ENCODE measurements at regions of chr15 and their contacts with region 1.

Region 1: DNA sequence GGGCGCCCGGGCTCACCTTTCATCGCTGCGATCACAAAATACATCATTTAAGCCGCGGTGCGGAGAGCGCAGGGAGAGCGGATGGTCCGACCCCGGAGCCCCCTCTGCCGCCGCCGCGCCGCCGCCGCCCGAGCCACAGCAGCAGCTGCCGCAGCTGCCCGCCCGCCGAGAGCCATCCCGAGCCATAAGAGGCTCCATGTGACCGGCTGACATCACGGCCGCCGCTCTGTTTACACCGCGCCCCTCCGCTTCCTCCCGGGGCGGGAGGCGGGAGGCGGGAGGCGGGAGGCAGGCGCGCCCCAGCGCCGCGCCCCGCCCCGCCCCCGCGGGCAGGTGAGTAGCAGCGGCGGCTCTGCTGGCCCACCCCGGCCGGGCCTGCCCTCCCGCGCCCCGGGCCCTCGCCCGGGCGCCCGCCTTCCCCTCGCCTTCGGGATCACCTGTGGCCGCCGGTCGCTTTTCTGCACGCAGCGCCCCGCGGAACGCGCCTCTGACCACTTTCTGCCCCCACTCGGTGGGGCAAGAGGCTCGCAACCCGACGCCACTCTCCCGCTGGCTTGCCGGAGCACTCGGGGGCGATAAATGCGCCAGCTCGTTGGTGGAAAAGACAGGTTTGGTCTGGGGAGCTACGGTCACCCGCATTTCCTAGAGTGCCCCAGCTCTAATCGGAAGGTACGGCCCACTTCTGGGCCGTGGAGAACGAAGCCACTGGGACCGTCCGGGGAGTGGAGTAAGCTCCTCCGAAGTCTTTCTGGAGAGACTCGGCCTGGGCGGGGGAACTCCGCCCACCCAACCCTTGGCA is 113.6 kb upstream of the ICE2 start:
- DNase-seq: peak; percentile 74
- H3K4me3 ChIP-seq: peak overlapping the region; percentile 33 to 83 (median 49)
- H3K27ac ChIP-seq: peak overlapping the region; percentile 2
- H3K4me1 ChIP-seq: peaks cover 14% of the 10 kb centered on the region
- H3K27me3 ChIP-seq: no peaks in the 10 kb centered on the region
- CTCF ChIP-seq: peak; percentile 23 to 49
- POLR2A ChIP-seq: no peak

Region 2: GRCh38 chr15:60635507-60636352 is 43.2 kb after region 1 on chr15:
- CTCF ChIA-PET with region 1: no interaction called
- POLR2A ChIA-PET with region 1: no interaction called
- dilution Hi-C with region 1: no loop called
- intact Hi-C with region 1: loop called (anchors 2 kb)
- DNase-seq: peak; percentile 69
- H3K4me3 ChIP-seq: peak overlapping the region in 1 of 3 experiments; percentile 10
- H3K27ac ChIP-seq: peak overlapping the region; percentile 93
- H3K4me1 ChIP-seq: peaks cover 17% of the 10 kb centered on the region
- H3K27me3 ChIP-seq: no peaks in the 10 kb centered on the region
- CTCF ChIP-seq: no peak
- POLR2A ChIP-seq: no peak

Region 3: DNA sequence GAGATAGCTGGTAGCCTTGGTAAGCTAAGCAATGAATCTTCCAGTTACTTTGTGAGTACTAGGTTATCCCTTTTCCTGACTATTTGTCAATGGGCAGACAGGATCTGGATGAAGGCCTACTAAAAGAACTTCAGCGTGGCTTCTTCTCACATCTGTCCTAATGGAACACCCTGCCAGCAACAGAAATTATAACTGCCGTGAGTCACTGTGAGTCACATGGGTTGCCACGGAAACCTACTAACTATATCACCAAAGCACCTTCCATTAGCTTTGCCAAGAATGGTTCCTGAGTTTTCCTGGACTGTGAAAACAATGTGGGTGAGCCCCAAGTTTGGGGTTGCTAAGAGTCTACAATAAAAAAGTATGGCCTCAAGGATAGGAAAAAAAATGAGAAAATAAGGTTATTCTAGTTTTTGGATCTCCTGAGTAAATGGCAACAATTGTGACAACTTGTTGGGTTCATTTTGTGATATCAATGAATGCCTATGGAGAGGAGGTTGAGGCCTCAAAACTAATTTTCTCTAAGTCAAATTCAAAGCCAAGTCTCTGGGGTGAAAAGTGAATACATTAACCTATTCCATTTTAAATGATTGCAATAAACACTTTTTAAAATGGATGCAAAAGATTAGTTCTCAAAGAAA is 81.5 kb after region 1 on chr15:
- CTCF ChIA-PET with region 1: no interaction called
- POLR2A ChIA-PET with region 1: no interaction called
- dilution Hi-C with region 1: no loop called
- intact Hi-C with region 1: loop called (anchors 1 kb)
- DNase-seq: peak; percentile 97
- H3K4me3 ChIP-seq: no peak overlapping the region
- H3K27ac ChIP-seq: peak overlapping the region; percentile 68
- H3K4me1 ChIP-seq: peaks cover 9% of the 10 kb centered on the region
- H3K27me3 ChIP-seq: no peaks in the 10 kb centered on the region
- CTCF ChIP-seq: no peak
- POLR2A ChIP-seq: no peak

Region 4: DNA sequence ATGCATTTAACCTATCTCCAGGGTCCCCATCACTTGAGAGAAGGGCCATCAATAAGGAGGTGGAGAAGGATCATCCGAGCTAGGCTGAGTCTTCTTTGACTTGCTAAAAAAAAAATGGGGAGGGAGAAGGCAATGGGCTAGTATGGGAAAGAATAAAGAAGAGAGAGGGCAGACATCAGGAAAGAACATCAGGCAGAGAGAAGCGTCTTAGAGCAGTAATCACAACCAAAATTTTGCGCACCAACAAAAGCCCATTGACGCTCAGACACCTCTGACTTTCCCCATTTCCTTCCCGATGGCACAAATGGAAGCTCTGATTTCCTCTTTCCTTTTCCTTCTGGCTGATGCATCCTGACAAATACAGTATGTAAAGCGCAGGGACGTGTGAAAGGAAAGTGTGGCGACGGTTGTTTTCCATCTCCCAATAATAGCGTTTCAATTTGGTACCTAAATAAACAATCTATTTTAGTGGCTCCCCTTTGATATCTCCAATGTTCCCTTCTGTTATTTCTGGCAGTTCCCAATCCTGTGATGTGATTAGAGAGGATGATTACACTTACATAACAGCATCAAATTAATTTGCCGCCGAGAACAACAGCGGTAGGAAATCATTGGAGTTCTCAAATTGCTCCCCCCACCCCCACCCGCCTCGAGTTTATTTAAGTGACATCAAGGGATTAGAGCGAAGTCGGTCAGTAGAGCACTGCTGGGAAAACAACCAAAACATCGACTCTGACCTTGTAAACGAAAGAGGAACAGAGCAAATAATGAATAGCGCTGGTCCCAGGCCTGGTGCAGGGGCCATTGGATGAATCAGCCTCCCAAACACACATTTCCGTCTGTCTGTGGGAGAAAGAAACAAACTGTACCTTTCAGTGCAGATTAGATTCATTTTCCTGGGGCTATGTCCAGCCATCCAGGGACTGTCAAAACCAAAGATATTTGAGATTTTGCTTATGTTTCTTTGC is 159.7 kb after region 1 on chr15:
- CTCF ChIA-PET with region 1: no interaction called
- POLR2A ChIA-PET with region 1: no interaction called
- dilution Hi-C with region 1: no loop called
- intact Hi-C with region 1: loop called (anchors 1 kb)
- DNase-seq: peak; percentile 88
- H3K4me3 ChIP-seq: peak overlapping the region in 2 of 3 experiments; percentile 6 to 47
- H3K27ac ChIP-seq: peak overlapping the region; percentile 65
- H3K4me1 ChIP-seq: peaks cover 22% of the 10 kb centered on the region
- H3K27me3 ChIP-seq: no peaks in the 10 kb centered on the region
- CTCF ChIP-seq: no peak
- POLR2A ChIP-seq: no peak

Region 5: DNA sequence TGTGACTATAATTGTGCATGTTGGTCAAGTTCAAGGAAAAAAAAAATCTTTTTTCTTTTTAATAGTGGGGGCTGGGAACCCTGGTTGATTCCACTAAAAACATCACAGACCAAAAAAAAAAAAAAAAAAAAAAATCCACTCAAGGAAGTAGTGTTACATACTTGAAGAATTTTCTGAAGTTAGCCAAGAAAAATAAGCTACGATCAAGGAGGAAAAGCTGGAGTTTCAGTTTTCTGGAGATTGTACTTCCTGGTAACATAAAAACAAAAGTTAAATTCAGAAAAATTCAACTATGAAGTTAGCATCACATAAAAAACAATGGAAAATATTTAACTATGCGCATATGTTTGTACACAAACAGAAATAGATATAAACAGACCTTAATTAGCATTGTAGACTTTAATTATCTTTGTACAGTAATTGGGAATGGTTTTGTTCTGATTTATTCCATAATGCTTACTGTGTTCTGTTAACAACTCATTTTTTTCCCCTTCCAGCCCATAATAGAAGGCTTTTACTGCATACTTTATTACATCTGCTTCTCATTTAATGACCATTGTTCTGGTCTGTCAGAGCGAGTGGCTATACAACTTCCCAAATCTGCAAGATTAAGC is 442.2 kb after region 1 on chr15:
- CTCF ChIA-PET with region 1: interaction called, 5 read pairs
- POLR2A ChIA-PET with region 1: no interaction called
- dilution Hi-C with region 1: no loop called
- intact Hi-C with region 1: loop called (anchors 2 kb)
- DNase-seq: peak; percentile 92
- H3K4me3 ChIP-seq: peak overlapping the region in 1 of 3 experiments; percentile 52
- H3K27ac ChIP-seq: peak overlapping the region; percentile 95
- H3K4me1 ChIP-seq: peaks cover 61% of the 10 kb centered on the region
- H3K27me3 ChIP-seq: no peaks in the 10 kb centered on the region
- CTCF ChIP-seq: no peak
- POLR2A ChIP-seq: no peak

Measured in endothelial cell of umbilical vein (primary cell).